ENCODE measurements at regions of chr7 and their contacts with region 1.

Region 1: GRCh38 chr7:34823640-34824258 is 165.7 kb downstream of the NPSR1 start:
- DNase-seq: peak; percentile 15 to 67 (median 48)
- ATAC-seq: peak; percentile 56
- H3K4me3 ChIP-seq: no peak overlapping the region
- H3K4me3 Mint-ChIP-seq: no peak overlapping the region
- H3K27ac ChIP-seq: no peak overlapping the region
- H3K27ac Mint-ChIP-seq: no peak overlapping the region
- H3K4me1 ChIP-seq: no peaks in the 10 kb centered on the region
- H3K4me1 Mint-ChIP-seq: no peaks in the 10 kb centered on the region
- H3K27me3 ChIP-seq: no peaks in the 10 kb centered on the region
- H3K27me3 Mint-ChIP-seq: no peaks in the 10 kb centered on the region
- CTCF ChIP-seq: peak; percentile 84

Region 2: GRCh38 chr7:34912236-34912635 is 88.5 kb after region 1 on chr7:
- CTCF ChIA-PET with region 1: no interaction called
- POLR2A ChIA-PET with region 1: no interaction called
- intact Hi-C with region 1: no loop called
- DNase-seq: no peak
- ATAC-seq: no peak
- H3K4me3 ChIP-seq: no peak overlapping the region
- H3K4me3 Mint-ChIP-seq: no peak overlapping the region
- H3K27ac ChIP-seq: no peak overlapping the region
- H3K27ac Mint-ChIP-seq: no peak overlapping the region
- H3K4me1 ChIP-seq: no peaks in the 10 kb centered on the region
- H3K4me1 Mint-ChIP-seq: no peaks in the 10 kb centered on the region
- H3K27me3 ChIP-seq: no peaks in the 10 kb centered on the region
- H3K27me3 Mint-ChIP-seq: no peaks in the 10 kb centered on the region
- CTCF ChIP-seq: no peak

Region 3: DNA sequence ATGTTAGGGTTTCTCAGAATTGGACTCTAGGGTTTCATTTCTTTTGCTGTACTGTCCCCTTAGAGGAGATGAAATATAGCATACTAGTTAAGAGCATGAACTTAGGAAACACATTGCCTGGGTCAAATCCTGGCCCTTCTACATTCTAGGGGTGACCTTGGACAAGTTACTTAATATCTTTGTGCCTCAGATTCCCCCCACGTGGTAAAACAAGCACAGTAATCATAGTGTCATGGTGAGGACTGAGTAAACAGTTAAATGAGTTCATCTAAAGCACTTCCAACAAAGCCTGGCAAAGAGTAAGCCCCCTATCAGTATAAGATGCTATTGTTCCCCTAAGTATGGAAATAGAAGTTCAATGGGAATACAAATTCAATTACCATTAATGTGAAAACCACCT is 208.4 kb after region 1 on chr7:
- CTCF ChIA-PET with region 1: interaction called, 8 read pairs
- POLR2A ChIA-PET with region 1: no interaction called
- intact Hi-C with region 1: loop called (anchors 1 to 5 kb)
- DNase-seq: no peak
- ATAC-seq: no peak
- H3K4me3 ChIP-seq: no peak overlapping the region
- H3K4me3 Mint-ChIP-seq: no peak overlapping the region
- H3K27ac ChIP-seq: no peak overlapping the region
- H3K27ac Mint-ChIP-seq: no peak overlapping the region
- H3K4me1 ChIP-seq: peaks cover 18% of the 10 kb centered on the region
- H3K4me1 Mint-ChIP-seq: peaks cover 24% of the 10 kb centered on the region
- H3K27me3 ChIP-seq: no peaks in the 10 kb centered on the region
- H3K27me3 Mint-ChIP-seq: no peaks in the 10 kb centered on the region
- CTCF ChIP-seq: no peak

Region 4: DNA sequence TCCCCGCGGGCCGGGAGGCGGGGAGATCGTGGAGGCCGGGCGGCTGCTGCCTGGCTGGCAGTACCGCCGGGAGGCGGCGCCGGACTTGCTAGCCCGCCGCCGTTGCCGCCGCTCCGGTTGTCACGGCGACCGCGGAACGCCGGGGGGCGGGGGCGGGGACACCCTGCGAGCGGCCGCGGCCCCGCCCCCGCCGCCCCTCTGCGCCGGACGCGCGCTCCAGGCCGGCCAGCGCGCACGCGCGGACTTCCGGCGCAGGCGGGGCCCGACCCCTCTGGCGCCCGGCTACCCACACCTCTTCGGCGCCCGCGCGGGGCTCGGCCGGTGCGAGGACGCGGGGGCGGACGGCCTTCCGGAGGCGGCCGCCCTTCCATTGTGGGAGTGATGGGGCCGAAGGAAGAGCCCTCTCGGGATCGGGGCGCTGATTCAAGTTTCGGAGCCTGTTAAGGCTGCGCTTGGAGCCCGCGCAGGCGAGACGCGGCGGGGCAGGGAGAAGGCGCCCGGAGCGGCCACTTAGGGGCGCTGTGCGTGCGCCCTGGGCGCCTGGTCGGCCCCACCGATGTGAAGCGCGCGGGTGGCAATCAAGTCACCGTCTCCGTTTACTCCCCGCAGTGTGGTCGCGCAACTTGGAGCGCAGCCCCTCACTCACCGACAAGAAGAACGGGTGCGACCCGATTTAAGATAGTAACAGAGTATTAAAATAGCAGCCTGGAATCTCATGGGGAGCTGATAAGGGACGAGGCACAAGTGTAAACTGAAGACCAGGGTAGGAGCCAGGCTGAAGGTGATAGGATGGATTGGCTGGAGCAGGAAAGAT is 214.0 kb after region 1 on chr7:
- CTCF ChIA-PET with region 1: interaction called, 8 read pairs
- POLR2A ChIA-PET with region 1: no interaction called
- intact Hi-C with region 1: loop called (anchors 1 to 5 kb)
- DNase-seq: peak; percentile 76 to 96 (median 90)
- ATAC-seq: peak; percentile 71
- H3K4me3 ChIP-seq: peak overlapping the region; percentile 44 to 66
- H3K4me3 Mint-ChIP-seq: peak overlapping the region; percentile 89
- H3K27ac ChIP-seq: peak overlapping the region; percentile 26 to 49
- H3K27ac Mint-ChIP-seq: peak overlapping the region; percentile 80
- H3K4me1 ChIP-seq: peaks cover 25% of the 10 kb centered on the region
- H3K4me1 Mint-ChIP-seq: peaks cover 32% of the 10 kb centered on the region
- H3K27me3 ChIP-seq: no peaks in the 10 kb centered on the region
- H3K27me3 Mint-ChIP-seq: no peaks in the 10 kb centered on the region
- CTCF ChIP-seq: peak; percentile 74

Region 5: GRCh38 chr7:35519971-35520809 is 696.4 kb after region 1 on chr7:
- CTCF ChIA-PET with region 1: no interaction called
- POLR2A ChIA-PET with region 1: no interaction called
- intact Hi-C with region 1: loop called in 1 of 2 experiments (anchors 5 kb)
- DNase-seq: peak in 7 of 9 experiments; percentile 10 to 67 (median 40)
- ATAC-seq: peak; percentile 78
- H3K4me3 ChIP-seq: no peak overlapping the region
- H3K4me3 Mint-ChIP-seq: no peak overlapping the region
- H3K27ac ChIP-seq: no peak overlapping the region
- H3K27ac Mint-ChIP-seq: no peak overlapping the region
- H3K4me1 ChIP-seq: no peaks in the 10 kb centered on the region
- H3K4me1 Mint-ChIP-seq: peaks cover 3% of the 10 kb centered on the region
- H3K27me3 ChIP-seq: no peaks in the 10 kb centered on the region
- H3K27me3 Mint-ChIP-seq: peaks cover 11% of the 10 kb centered on the region
- CTCF ChIP-seq: peak; percentile 77

Region 6: DNA sequence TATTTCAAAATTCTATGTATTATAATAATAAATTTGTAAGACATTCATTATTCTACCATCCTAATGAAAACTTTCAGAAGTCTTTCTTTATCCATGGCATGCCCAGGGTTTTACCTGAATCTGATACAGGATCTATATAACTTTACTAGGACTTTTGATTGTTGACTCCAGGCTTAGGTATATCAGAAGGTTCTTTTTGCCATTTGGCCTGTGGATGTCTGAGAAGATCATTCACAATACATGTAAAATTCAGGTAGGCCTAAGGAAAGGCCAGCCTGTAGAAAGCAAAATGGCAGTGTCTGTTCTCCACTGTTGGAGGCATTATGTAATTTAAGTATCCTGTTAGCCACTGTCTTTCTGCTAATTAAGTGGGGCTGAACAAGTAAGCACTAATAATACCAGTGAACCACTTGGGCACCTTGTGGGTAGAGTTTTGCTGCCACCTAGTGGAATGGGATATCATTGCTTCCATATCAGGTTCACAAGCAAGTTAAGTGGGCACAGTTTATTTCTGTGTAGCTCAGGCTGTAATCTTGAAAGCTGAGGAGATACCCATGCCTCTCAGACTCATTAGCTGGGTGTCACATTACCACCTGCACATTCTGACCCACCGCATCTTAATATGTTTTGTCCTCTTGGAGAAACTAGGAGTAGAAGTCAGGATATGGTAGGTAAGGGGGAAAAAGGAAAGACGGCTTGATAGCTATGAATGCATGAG is 1082.6 kb after region 1 on chr7:
- CTCF ChIA-PET with region 1: no interaction called
- POLR2A ChIA-PET with region 1: no interaction called
- intact Hi-C with region 1: loop called in 1 of 2 experiments (anchors 10 kb)
- DNase-seq: peak; percentile 44 to 86 (median 69)
- ATAC-seq: peak; percentile 94
- H3K4me3 ChIP-seq: no peak overlapping the region
- H3K4me3 Mint-ChIP-seq: no peak overlapping the region
- H3K27ac ChIP-seq: no peak overlapping the region
- H3K27ac Mint-ChIP-seq: no peak overlapping the region
- H3K4me1 ChIP-seq: no peaks in the 10 kb centered on the region
- H3K4me1 Mint-ChIP-seq: peaks cover 19% of the 10 kb centered on the region
- H3K27me3 ChIP-seq: no peaks in the 10 kb centered on the region
- H3K27me3 Mint-ChIP-seq: no peaks in the 10 kb centered on the region
- CTCF ChIP-seq: peak; percentile 95